ENCODE measurements at regions of chr11 and their contacts with region 1.

Region 1: DNA sequence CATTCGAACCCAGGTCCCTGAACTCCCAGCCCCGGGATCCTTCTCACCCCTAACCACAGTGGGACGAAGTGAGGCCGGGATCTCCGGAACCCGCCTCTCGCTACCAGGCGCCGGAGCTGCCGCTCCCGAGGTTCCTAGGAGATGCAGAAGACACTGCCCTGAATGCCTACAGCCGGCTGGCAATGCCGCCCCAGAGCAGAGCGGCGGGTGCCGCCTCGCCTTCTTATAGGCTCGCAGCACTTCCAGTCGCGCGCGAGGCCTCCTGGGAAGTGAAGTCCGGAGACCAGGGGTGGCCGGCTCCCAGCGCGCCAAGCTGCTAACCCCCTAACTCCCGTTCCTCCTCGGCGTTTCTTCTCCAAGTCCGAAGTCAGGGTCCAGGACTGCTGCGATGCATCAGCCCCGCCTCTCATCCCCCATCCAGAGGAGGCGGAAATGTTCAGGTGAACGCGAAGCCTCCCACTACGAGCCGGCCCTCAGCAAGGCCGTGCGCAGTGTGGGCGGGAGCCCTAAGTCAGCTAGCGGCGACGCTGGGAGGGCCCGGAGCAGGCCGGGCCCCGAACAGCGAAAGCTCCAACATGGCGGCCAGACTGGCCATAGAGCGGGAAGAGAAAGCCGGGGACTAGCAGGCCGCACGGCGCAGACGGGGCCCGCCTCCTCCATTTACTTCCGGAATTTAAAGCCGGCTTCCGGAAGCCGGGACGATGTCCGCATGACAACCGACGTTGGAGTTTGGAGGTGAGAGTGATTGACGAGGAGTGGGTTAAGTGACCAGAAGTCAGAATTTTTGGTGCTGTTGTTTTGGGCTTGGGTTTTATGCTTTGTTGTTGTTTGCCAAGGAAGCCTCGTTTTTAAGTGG is at the starts of genes CYB561A3 and TMEM138:
- DNase-seq: peak; percentile 87 to 91
- ATAC-seq: peak; percentile 86
- H3K4me3 ChIP-seq: peak within 1 kb of the TSS; percentile 88 to 99 (median 94)
- H3K27ac ChIP-seq: peak within 1 kb of the TSS; percentile 98 to 100 (median 100)
- H3K4me1 ChIP-seq: peaks cover 24 to 29% of the 10 kb centered on the region in 2 donors
- H3K27me3 ChIP-seq: no peaks in the 10 kb centered on the region
- CTCF ChIP-seq: no peak
- POLR2A ChIP-seq: peak; percentile 94 to 98
- total RNA-seq, gene CYB561A3: 23.7 to 56.6 (median 26.4) TPM
- total RNA-seq, gene TMEM138: 9.4 to 18.4 (median 13.9) TPM

Region 2: DNA sequence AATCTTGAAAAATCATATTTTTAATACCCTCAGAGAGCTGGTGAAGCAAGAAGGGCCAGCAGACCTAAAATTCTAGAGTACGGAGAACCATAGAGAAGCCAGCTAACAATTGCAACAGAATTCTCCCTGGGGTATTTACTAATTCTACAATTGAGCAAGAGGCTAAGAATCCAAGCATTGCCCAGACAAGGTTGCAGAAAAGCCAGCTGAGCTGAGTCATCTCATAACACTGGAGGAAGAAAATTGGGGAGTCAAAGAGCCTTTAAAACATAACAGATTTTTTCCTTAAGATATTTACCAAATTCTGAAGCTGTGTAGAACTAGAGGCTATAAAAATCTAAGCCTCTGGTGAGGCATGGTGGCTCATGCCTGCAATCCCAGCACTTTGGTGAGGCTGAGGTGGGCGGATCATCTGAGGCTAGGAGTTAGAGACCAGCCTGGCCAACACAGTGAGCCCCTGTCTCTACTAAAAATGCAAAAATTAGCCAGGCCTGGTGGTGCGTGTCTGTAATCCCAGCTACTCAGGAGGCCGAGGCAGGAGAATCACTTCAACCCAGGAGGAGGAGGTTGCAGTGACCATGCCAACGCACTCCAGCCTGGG is 16.9 kb after region 1 on chr11:
- in situ Hi-C with region 1: no loop called
- intact Hi-C with region 1: loop called (anchors 1 kb)
- DNase-seq: peak; percentile 27 to 62
- ATAC-seq: peak; percentile 92 to 99
- H3K4me3 ChIP-seq: no peak overlapping the region
- H3K27ac ChIP-seq: peak overlapping the region; percentile 27 to 82 (median 53)
- H3K4me1 ChIP-seq: peaks cover 8 to 15% of the 10 kb centered on the region in 2 donors
- H3K27me3 ChIP-seq: no peaks in the 10 kb centered on the region
- CTCF ChIP-seq: no peak
- POLR2A ChIP-seq: no peak

Region 3: GRCh38 chr11:61429691-61430582 is 68.0 kb after region 1 on chr11 and contains the starts of genes CPSF7 and SDHAF2:
- in situ Hi-C with region 1: no loop called
- intact Hi-C with region 1: loop called (anchors 2 kb)
- DNase-seq: peak; percentile 94 to 95
- ATAC-seq: peak; percentile 94 to 98
- H3K4me3 ChIP-seq: peak within 1 kb of the TSS; percentile 73 to 89 (median 76)
- H3K27ac ChIP-seq: peak within 1 kb of the TSS; percentile 90 to 98 (median 94)
- H3K4me1 ChIP-seq: peaks cover 19 to 30% of the 10 kb centered on the region in 2 donors
- H3K27me3 ChIP-seq: no peaks in the 10 kb centered on the region
- CTCF ChIP-seq: peak in 1 of 5 experiments; percentile 13
- POLR2A ChIP-seq: peak; percentile 82 to 87
- total RNA-seq, gene CPSF7: 38.9 to 180 (median 42.5) TPM
- total RNA-seq, gene SDHAF2: 32.1 to 84.4 (median 53.8) TPM

Measured in gastrocnemius medialis (tissue), 4 donors.